GM10248 (cell line): ENCODE measurements at regions of chr12 and their contacts with region 1.

Region 1: DNA sequence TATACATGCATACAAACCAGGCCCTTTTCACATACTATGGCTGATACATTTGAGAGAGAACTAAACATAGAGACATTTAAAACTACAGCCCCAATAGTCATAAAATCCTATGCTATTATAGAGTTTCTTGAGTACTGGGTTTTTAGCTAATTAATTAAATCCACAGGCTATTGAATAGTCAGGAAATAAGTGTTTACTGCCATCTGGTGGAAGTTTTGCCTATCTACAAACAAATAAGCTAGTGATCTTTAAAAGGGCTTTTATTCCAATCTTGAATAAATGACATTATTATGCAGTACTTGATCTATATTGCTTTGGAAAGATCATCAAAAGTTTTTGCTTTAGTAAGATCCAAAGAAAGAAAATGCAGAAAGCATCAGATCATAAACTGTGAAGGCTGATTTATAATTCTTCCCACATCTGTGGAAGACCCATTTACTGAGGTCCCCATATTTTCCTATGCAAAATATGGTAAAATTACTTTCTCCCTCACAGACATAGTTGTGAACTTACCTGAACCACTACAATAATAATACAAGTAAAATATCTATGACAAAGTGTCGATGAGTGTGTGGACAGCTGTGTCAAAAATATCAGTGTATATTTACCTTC is 131.3 kb downstream of the ITPR2 start:
- DNase-seq: peak; percentile 15
- CTCF ChIP-seq: peak; percentile 28

Region 2: GRCh38 chr12:25942709-25943108 is 759.0 kb before region 1 on chr12:
- CTCF ChIA-PET with region 1: no interaction called
- POLR2A ChIA-PET with region 1: no interaction called
- DNase-seq: no peak
- CTCF ChIP-seq: no peak

Region 3: DNA sequence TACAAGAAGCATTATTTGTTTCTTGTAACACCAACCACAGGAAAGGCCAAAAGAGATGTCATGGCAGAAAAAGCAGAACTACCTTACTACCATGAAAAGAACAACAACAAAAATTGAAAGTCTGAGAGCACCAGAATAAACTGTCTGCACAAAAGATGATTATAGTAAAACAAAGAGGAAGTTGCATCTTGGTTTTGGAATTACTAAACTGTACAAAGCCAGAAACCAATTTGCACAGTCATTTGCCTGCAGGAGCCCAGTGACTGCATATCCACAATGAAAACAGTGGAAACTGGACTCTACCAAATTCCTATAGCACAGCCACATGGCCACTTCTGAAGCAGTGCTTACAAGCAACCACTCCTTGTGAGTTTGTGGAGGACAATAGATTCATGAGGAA is 230.2 kb before region 1 on chr12:
- CTCF ChIA-PET with region 1: no interaction called
- POLR2A ChIA-PET with region 1: no interaction called
- DNase-seq: peak; percentile 71
- CTCF ChIP-seq: peak; percentile 24

Region 4: GRCh38 chr12:26691234-26691970 is 10.3 kb before region 1 on chr12:
- CTCF ChIA-PET with region 1: interaction called, 17 read pairs
- POLR2A ChIA-PET with region 1: no interaction called
- DNase-seq: no peak
- CTCF ChIP-seq: no peak

Region 5: DNA sequence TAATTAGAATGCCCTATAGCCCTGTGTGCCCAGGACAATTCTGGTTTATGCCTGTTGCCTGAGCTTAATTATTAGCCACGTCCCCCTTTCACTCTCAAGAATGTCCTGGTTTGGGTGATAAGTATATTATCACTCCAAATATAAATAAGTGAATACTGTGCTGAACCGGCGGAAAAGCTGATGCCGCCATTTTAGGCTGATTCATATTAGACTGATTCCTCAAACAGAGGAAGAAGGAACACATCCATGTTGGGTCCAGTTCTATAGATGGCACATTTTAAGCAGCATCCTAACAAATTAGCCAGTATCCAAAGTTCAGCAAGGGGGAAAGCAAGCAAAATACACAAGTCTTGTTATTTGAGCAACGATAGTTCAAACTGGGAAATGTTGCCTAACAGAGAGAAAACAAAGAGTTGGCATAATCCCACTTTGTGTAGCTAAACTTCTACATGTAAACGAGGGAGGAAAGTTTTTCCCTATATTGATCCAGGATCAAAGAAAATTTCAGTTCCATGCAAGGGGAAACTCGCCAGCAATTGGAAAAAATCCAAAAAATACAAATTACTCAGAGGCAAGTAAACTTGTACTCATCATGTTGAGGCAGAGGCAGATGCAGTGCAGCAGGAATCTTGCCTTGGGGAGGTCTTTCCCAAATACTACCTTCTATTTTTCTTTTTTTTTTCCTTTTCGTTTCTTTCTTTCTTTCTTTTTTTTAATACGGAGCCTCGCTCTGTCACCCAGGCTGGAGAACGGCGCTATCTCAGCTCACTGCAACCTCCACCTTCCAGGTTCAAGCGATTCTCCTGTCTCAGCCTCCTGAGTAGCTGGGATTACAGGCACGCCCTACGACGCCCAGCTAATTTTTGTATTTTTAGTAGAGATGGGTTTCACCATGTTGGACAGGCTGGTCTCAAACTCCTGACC is 35.1 kb after region 1 on chr12:
- CTCF ChIA-PET with region 1: no interaction called
- POLR2A ChIA-PET with region 1: no interaction called
- DNase-seq: no peak
- CTCF ChIP-seq: no peak